ENCODE measurements at regions of chr4 and their contacts with region 1.

Region 1: GRCh38 chr4:168923526-168924194 is 86.4 kb downstream of the CBR4 start:
- DNase-seq: peak; percentile 42
- H3K4me3 ChIP-seq: no peak overlapping the region
- CTCF ChIP-seq: peak; percentile 78

Region 2: GRCh38 chr4:168514249-168514852 is 409.3 kb before region 1 on chr4:
- CTCF ChIA-PET with region 1: interaction called, 66 read pairs
- POLR2A ChIA-PET with region 1: no interaction called
- DNase-seq: no peak
- H3K4me3 ChIP-seq: no peak overlapping the region
- CTCF ChIP-seq: no peak

Region 3: GRCh38 chr4:168831919-168832762 is 91.5 kb before region 1 on chr4:
- CTCF ChIA-PET with region 1: interaction called, 28 read pairs
- POLR2A ChIA-PET with region 1: no interaction called
- DNase-seq: no peak
- H3K4me3 ChIP-seq: peak overlapping the region; percentile 91
- CTCF ChIP-seq: no peak

Region 4: GRCh38 chr4:168942985-168943384 is 19.3 kb after region 1 on chr4:
- CTCF ChIA-PET with region 1: interaction called, 53 read pairs
- POLR2A ChIA-PET with region 1: no interaction called
- DNase-seq: no peak
- H3K4me3 ChIP-seq: no peak overlapping the region
- CTCF ChIP-seq: peak; percentile 12

Region 5: GRCh38 chr4:169485791-169486742 is 562.4 kb after region 1 on chr4:
- CTCF ChIA-PET with region 1: interaction called, 115 read pairs
- POLR2A ChIA-PET with region 1: no interaction called
- DNase-seq: no peak
- H3K4me3 ChIP-seq: no peak overlapping the region
- CTCF ChIP-seq: peak; percentile 41